ENCODE measurements at regions of chr3 and their contacts with region 1.

Region 1: GRCh38 chr3:46078712-46079400 is 51.6 kb upstream of the XCR1 start:
- DNase-seq: peak; percentile 61 to 91 (median 85)
- ATAC-seq: peak; percentile 96 to 98 (median 98)
- H3K4me3 ChIP-seq: peak overlapping the region in 5 of 12 donors; percentile 11 to 29 (median 21)
- H3K27ac ChIP-seq: no peak overlapping the region
- H3K4me1 ChIP-seq: peaks cover 0 to 4% (median 0%) of the 10 kb centered on the region in 12 donors
- H3K27me3 ChIP-seq: no peaks in the 10 kb centered on the region
- CTCF ChIP-seq: peak; percentile 89 to 100 (median 96)
- POLR2A ChIP-seq: no peak

Region 2: DNA sequence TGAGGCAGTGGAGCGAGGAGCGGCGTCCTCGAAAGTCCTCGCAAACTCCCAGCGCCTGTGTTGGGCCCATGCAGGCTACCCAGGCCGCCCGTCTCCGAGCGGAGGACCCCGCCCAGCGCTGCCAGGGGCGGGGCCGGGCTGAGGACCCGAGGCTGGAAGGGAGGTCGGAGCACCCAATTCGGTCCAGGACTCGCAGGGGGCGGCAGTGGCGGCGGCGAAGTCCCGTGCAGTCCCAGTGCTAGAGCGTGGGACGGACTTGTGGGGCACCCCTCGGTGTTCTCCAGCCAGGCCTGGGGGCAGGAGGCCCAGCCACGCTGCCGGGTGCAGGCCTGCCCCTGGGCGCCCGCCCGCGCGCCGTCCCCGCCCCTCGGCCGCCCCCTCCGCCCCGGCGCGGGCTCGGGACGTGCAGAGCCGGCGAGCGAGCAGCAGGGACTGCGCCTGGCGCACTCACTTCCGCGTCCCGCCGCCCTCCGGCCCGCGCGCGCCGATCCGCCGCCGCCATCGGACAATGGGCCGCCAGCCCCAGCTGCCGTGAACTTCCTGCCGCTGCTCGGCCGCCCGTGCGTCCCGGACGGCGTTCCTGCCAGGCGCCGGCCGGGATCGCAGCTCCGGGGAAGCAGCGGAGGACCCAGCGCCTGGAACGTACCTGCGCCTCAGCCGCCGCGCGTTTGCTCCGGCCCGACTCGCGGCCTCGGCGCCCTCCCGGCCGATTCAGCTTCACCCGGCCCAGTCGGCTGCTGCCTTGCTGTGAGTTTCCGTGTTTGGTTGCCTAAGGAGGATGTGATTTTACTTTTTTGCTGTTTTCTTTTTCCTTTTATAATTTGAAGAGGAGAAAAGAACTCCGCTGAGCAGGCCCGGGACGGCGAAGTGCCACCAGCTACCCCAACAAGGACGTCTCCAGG is 484.9 kb before region 1 on chr3:
- intact Hi-C with region 1: no loop called
- DNase-seq: peak; percentile 76 to 89 (median 83)
- ATAC-seq: peak; percentile 19 to 90 (median 74)
- H3K4me3 ChIP-seq: peak overlapping the region; percentile 56 to 97 (median 87)
- H3K27ac ChIP-seq: peak overlapping the region; percentile 89 to 97 (median 94)
- H3K4me1 ChIP-seq: peaks cover 0 to 57% (median 48%) of the 10 kb centered on the region in 12 donors
- H3K27me3 ChIP-seq: no peaks in the 10 kb centered on the region
- CTCF ChIP-seq: peak in 1 of 12 donors; percentile 12
- POLR2A ChIP-seq: peak in 1 of 2 donors; percentile 57

Region 3: DNA sequence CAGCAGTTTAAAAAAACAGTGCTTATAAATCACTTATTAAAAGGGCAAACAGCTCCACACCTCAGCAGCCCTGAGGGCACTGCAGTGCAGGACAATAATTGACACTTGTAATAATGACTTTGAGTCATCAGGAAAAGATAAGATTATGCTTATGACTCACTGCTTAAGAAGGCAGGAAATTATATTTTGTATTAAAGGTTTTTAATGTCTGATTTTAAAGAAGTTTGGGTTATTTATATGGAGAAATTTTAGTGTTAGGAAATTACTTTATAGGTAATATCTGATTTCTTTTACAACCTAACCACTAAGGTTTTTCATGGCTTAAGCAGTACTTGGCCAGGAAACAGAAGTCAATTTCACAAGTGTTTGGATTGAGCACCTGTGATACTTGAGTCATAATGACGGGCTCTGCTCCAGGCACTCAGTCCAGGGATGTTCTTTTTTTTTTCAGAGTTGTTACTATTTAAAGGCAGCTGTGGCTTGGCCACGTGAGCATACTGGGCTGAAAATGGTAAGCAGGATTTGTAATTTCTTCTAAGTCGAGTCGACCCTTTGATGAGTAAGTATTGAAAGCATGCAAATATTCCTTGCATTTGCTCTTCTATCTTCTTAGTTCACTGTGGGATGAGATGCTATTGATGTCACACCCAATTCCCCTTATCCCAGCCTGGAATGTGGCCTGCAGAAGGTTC is 260.9 kb before region 1 on chr3:
- intact Hi-C with region 1: no loop called
- DNase-seq: peak in 3 of 5 donors; percentile 20 to 55 (median 51)
- ATAC-seq: peak; percentile 72 to 89 (median 88)
- H3K4me3 ChIP-seq: no peak overlapping the region
- H3K27ac ChIP-seq: peak overlapping the region in 5 of 12 donors; percentile 36 to 70 (median 50)
- H3K4me1 ChIP-seq: peaks cover 0 to 32% (median 18%) of the 10 kb centered on the region in 12 donors
- H3K27me3 ChIP-seq: no peaks in the 10 kb centered on the region
- CTCF ChIP-seq: no peak
- POLR2A ChIP-seq: no peak

Region 4: GRCh38 chr3:45841757-45842491 is 236.9 kb before region 1 on chr3 and contains the start of gene LZTFL1:
- intact Hi-C with region 1: loop called in 3 of 10 experiments (anchors 5 to 10 kb)
- DNase-seq: peak; percentile 90 to 95 (median 93)
- ATAC-seq: peak; percentile 94 to 99 (median 98)
- H3K4me3 ChIP-seq: peak within 1 kb of the TSS; percentile 67 to 98 (median 86)
- H3K27ac ChIP-seq: peak within 1 kb of the TSS in 7 of 12 donors; percentile 17 to 53 (median 38)
- H3K4me1 ChIP-seq: peaks cover 0 to 16% (median 8%) of the 10 kb centered on the region in 12 donors
- H3K27me3 ChIP-seq: no peaks in the 10 kb centered on the region
- CTCF ChIP-seq: no peak
- POLR2A ChIP-seq: peak in 1 of 2 donors; percentile 44
- total RNA-seq, gene LZTFL1: 6.7 to 13.0 (median 8.8) TPM

Region 5: GRCh38 chr3:45938864-45939263 is 140.0 kb before region 1 on chr3:
- intact Hi-C with region 1: loop called (anchors 1 to 2 kb)
- DNase-seq: peak; percentile 69 to 85 (median 78)
- ATAC-seq: peak; percentile 64 to 89 (median 88)
- H3K4me3 ChIP-seq: no peak overlapping the region
- H3K27ac ChIP-seq: peak overlapping the region in 1 of 12 donors; percentile 28
- H3K4me1 ChIP-seq: peaks cover 0 to 41% (median 16%) of the 10 kb centered on the region in 12 donors
- H3K27me3 ChIP-seq: no peaks in the 10 kb centered on the region
- CTCF ChIP-seq: peak; percentile 78 to 90 (median 86)
- POLR2A ChIP-seq: no peak

Region 6: DNA sequence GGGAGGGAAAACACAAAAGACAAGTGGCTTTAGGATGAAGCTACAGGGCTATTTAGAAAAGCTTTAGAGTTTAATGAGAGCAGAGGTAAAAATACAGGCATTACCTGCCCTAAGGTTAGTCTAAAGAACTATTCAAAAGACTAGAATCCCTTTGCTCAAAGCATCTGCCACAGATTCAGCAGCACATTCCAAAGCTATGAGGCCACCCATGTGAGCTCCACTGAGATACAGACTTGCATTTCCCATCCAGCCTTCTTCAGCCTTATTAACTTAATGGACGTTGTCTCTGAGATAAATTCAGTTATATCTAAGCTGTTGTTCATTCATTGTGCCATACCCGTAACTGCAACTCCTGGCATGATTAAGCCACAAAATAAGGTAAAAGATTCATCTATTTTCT is 110.2 kb before region 1 on chr3:
- intact Hi-C with region 1: loop called in 1 of 10 experiments (anchors 5 kb)
- DNase-seq: no peak
- ATAC-seq: peak in 2 of 4 donors; percentile 41 to 44
- H3K4me3 ChIP-seq: no peak overlapping the region
- H3K27ac ChIP-seq: peak overlapping the region in 1 of 12 donors; percentile 7
- H3K4me1 ChIP-seq: peaks cover 0 to 68% (median 28%) of the 10 kb centered on the region in 12 donors
- H3K27me3 ChIP-seq: no peaks in the 10 kb centered on the region
- CTCF ChIP-seq: no peak
- POLR2A ChIP-seq: no peak

Region 7: GRCh38 chr3:45986303-45986982 is 92.4 kb before region 1 on chr3:
- intact Hi-C with region 1: loop called in 2 of 10 experiments (anchors 5 to 10 kb)
- DNase-seq: peak in 4 of 5 donors; percentile 61 to 84 (median 66)
- ATAC-seq: peak; percentile 77 to 88 (median 82)
- H3K4me3 ChIP-seq: no peak overlapping the region
- H3K27ac ChIP-seq: peak overlapping the region; percentile 78 to 98 (median 96)
- H3K4me1 ChIP-seq: peaks cover 18 to 97% (median 76%) of the 10 kb centered on the region in 12 donors
- H3K27me3 ChIP-seq: no peaks in the 10 kb centered on the region
- CTCF ChIP-seq: no peak
- POLR2A ChIP-seq: peak in 1 of 2 donors; percentile 16

Region 8: DNA sequence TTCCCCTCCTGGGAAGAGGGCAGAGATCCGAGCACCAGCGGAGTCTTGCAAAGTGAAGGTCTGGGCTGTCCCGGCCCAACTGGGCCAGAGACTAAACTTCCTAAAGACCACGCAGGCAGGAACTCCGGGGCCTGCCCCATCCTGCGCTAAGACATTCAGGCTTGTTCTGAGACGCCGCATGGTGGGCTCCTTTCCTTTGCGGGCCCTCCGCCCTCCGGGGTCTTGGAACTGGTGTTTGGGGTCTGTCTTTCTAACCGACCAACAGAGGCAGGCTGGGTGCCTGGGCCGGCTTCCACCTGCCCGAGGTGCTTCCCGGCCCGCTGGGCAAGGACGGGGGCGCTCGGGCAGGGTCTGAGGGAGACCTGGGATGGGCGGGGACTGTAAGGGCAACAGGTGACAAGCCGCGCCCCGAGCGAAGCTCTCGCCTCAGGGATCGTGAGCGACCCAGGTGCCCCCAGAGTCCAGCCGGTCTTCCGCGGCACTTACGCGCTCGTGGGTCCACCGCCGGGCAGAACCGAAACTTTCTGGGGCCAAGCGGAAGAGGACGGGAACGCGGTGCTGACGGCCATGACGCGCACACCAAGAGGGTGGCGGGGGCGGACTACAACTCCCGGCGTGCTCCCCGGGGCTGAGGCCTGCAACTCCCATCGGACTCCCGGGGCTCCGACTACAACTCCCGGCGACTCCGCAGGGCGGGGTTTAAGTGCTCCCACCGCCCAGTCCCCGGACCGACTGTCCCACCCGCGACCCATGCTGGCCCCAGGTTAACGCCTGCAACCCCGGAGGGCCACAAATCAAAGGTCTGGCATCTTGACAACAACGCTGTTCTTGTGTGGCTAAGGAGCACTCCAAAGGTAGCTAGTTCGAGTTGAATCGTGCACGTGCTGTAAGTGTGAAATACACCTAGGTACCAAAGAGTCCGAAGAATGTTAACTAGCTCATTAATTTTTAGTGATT is 83.3 kb before region 1 on chr3 and contains the start of gene FYCO1:
- intact Hi-C with region 1: loop called in 1 of 10 experiments (anchors 10 kb)
- DNase-seq: peak; percentile 95 to 98 (median 97)
- ATAC-seq: peak; percentile 94 to 96 (median 94)
- H3K4me3 ChIP-seq: peak within 1 kb of the TSS; percentile 68 to 99 (median 88)
- H3K27ac ChIP-seq: peak within 1 kb of the TSS; percentile 86 to 98 (median 96)
- H3K4me1 ChIP-seq: peaks cover 0 to 53% (median 44%) of the 10 kb centered on the region in 12 donors
- H3K27me3 ChIP-seq: no peaks in the 10 kb centered on the region
- CTCF ChIP-seq: peak in 1 of 12 donors; percentile 7
- POLR2A ChIP-seq: peak in 1 of 2 donors; percentile 77
- total RNA-seq, gene FYCO1: 57.3 to 195 (median 149) TPM